ENCODE measurements at regions of chr10 and their contacts with region 1.

Region 1: DNA sequence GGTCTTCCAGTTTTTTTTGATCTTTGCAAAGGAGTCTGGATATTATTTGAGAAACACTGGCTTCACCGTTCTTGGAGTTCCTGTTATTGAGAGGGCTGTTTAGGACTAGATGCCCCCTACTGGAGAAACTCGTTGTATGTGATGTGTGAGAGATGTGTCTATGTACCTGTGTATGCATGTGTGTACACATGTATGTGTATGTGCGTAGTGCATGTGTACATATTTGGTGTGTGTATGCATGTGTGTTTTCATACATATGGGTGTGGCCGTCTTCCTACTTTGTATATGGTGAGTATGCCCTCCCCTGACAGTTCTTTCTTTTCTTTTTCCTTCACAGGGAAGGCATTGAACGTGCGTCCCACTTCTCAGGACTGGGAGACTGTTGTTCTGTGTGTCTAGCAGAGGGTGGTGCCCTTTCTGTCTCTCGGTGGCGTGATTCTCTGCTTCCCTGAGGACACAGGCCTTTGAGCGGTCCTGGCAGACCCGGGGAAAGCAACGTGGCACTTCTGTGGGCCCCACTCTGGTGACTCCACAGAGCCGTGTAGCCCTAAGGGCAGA is 3.0 kb upstream of the CALHM3 start:
- DNase-seq: no peak
- ATAC-seq: peak; percentile 70

Region 2: GRCh38 chr10:103416436-103417147 is 65.5 kb before region 1 on chr10:
- intact Hi-C with region 1: loop called (anchors 2 kb)
- DNase-seq: peak; percentile 83
- ATAC-seq: peak; percentile 73

Measured in sciatic nerve (tissue), 2 donors.